Calu3 (cell line): ENCODE measurements at regions of chr1 and their contacts with region 1.

Region 1: DNA sequence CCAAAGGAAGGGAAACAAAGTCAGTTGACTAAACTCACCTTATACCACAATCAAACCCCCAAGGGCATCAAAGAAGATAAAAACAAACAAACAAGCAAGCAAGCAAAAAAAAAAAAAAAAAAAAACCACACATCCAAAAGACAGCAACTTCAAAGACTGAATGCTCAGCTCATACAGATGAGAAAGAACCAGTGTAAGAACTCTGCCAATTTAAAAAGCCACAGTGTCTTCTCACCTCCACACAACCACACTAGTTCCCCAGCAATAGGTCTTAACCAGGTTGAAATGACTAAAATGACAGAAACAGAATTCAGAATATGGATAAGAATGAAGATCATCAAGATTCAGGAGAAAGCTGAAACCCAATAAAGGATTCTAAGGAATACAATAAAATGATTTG is 193.4 kb downstream of the FAF1 start:
- DNase-seq: no peak
- H3K4me3 Mint-ChIP-seq: no peak overlapping the region
- H3K27ac Mint-ChIP-seq: no peak overlapping the region
- H3K4me1 Mint-ChIP-seq: no peaks in the 10 kb centered on the region
- H3K27me3 Mint-ChIP-seq: no peaks in the 10 kb centered on the region
- CTCF ChIP-seq: no peak

Region 2: DNA sequence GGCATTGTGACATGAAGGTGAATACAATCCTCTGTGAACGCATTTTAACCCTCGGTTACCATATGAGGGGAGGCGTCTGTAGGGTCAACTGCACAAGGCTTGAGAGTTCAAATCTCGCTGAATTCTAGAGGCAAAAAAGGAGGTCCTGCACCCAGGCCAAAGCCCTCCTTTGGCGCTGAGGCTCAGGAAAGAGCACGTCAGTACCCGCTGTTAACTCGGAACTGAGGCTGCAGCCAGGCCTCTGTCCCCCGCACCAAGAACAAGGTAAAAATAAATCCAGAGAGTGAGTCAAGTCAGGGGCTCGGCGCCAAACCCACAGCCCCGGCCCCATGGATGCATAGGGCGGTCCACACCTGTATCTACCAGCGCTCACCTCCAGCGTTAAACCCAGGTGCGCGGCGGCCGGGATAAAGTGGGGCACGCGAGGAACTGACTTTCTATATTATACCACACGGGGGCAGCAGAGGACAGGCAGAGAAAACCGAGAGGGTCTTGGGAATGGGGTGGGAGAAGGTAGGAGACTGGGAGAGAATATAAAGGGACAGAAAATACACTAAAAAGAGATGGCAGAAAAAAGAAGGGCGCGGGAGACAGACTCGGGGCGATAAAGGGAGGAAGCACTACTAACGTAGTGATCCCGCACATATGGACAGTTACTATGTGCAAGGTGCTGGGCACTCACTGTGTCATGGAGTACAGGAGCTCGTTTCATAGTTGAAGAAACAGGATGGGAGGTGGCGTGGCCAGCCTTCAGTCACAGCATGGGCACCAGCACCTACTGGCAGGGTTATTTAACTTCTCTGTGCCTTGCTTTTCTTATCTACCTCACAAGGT is 398.3 kb before region 1 on chr1:
- CTCF ChIA-PET with region 1: no interaction called
- intact Hi-C with region 1: no loop called
- DNase-seq: peak; percentile 69
- H3K4me3 Mint-ChIP-seq: no peak overlapping the region
- H3K27ac Mint-ChIP-seq: no peak overlapping the region
- H3K4me1 Mint-ChIP-seq: no peaks in the 10 kb centered on the region
- H3K27me3 Mint-ChIP-seq: peaks cover 70% of the 10 kb centered on the region
- CTCF ChIP-seq: peak; percentile 89

Region 3: DNA sequence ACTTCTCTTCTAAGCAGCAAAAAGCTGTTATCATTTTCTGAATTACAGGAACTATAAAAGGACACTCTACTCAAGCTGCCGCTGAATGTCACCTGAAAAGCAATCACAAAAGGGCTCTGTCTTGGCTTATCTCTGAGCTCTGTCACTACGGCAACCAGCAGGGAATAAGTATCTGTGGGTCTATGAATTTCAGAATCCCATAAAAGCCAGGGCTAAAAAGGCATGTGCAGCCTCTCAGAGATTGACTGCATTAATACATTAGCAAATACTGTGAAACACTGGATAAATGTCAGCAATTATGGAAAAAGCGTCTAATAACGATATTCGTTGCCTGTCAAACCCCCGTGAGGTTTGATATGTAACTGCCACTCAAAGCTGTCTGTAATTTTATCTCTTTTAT is 133.2 kb before region 1 on chr1:
- CTCF ChIA-PET with region 1: interaction called, 11 read pairs
- intact Hi-C with region 1: no loop called
- DNase-seq: peak; percentile 20
- H3K4me3 Mint-ChIP-seq: no peak overlapping the region
- H3K27ac Mint-ChIP-seq: peak overlapping the region; percentile 9
- H3K4me1 Mint-ChIP-seq: peaks cover 26% of the 10 kb centered on the region
- H3K27me3 Mint-ChIP-seq: no peaks in the 10 kb centered on the region
- CTCF ChIP-seq: no peak